Common myeloid progenitor, CD34-positive (primary cell): ENCODE measurements at regions of chr4 and their contacts with region 1.

Region 1: DNA sequence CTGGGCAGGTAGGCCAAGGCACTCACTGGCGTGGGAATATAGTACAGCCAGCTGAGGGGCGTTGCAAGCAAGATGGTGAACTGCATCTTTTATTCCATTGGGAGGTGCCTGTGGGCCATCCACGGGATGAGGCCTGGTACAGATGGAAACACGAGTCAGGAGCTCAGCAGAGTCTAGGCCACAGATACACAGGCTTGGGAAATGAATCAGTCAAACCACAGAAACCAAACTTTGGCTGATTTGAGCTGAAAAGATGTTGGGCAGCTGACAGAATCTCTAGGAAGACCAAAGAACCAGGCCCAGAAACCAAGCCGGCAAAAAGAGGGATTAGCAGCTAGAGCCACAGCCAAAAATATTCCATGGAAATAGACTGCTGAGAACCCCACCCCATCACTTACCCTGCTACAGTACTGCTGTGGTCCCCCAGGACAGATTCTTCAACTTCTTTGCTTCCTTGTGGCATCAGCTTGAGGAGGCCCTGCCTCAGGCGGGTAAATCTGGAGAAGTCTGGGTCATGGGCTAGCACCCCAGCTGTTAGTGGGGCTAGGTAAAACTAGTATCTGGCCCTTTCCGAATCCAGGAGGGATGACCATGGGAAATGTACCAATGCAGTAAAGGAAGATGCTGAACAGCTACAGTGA is 75.4 kb downstream of the TMEM131L start:
- DNase-seq: no peak
- H3K4me3 ChIP-seq: no peak overlapping the region
- H3K27ac ChIP-seq: no peak overlapping the region
- H3K4me1 ChIP-seq: peaks cover 0 to 5% (median 0%) of the 10 kb centered on the region in 4 experiments
- H3K27me3 ChIP-seq: no peaks in the 10 kb centered on the region

Region 2: DNA sequence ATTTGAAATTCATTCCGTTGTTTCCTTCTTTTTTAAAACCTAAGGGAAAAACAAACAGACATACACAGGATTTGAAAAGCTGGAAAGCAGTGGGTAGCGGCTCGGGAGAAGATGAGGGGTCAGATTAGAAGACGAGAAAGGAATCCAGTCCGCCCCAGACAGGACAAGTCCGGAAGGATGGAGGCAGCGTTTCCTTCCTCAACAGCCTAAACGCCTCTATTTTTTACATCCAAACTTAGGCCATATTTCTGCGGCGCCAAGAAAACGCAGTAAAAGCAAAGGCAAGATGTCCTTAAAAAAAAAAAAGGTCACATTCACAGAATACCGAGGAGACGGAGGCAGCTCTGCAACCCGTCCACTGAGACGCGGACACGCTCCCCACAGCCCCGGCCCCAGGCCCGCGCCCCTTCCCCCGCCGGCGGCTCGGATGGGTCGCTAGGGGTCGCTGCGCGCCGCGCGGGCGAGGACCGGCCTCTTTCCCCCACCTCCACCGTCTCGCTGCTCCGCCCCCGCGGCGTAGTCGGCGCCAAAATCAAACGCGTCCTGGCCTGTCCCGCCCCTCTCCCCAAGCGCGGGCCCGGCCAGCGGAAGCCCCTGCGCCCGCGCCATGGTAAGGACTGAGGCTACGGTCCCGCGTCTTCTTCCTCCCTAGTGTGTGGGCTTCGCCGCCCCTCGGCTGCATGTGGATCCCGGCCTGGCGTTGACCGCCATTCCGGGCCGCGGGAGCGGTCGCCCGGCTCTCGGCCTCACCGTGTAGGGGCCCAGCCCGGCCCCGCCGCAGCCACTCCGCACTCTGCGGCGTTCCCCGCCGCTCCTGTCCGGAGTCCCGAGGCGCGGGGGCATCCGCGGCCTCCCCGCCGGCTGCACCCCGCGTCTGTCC is 197.2 kb before region 1 on chr4 and contains the start of gene MND1:
- CTCF ChIA-PET with region 1: no interaction called
- POLR2A ChIA-PET with region 1: no interaction called
- DNase-seq: peak; percentile 80 to 90 (median 86)
- H3K4me3 ChIP-seq: peak within 1 kb of the TSS; percentile 82 to 96 (median 93)
- H3K27ac ChIP-seq: peak within 1 kb of the TSS in 1 of 2 experiments; percentile 50
- H3K4me1 ChIP-seq: peaks cover 12 to 30% (median 21%) of the 10 kb centered on the region in 4 experiments
- H3K27me3 ChIP-seq: no peaks in the 10 kb centered on the region

Region 3: DNA sequence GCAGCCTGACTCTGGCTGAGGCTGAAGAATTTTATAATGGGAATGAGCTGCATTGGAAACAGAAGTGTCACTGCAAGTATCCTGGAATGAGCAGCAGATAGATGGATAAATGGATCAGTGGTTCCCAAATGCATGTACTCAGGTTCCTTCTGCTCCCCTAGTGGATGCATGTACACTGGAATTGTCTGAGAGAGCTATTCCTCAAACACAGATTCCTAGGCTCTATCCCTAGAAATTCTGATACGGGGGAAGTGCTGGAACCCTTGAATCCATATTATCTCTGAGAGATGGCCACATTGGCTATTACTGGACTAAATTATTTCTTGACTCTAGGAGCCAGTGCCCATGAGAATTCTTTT is 10.6 kb before region 1 on chr4:
- CTCF ChIA-PET with region 1: interaction called, 12 read pairs
- POLR2A ChIA-PET with region 1: no interaction called
- DNase-seq: no peak
- H3K4me3 ChIP-seq: no peak overlapping the region
- H3K27ac ChIP-seq: no peak overlapping the region
- H3K4me1 ChIP-seq: peaks cover 11 to 32% (median 17%) of the 10 kb centered on the region in 4 experiments
- H3K27me3 ChIP-seq: no peaks in the 10 kb centered on the region